Breast epithelium (tissue), 4 donors: ENCODE measurements at regions of chr7 and their contacts with region 1.

Region 1: DNA sequence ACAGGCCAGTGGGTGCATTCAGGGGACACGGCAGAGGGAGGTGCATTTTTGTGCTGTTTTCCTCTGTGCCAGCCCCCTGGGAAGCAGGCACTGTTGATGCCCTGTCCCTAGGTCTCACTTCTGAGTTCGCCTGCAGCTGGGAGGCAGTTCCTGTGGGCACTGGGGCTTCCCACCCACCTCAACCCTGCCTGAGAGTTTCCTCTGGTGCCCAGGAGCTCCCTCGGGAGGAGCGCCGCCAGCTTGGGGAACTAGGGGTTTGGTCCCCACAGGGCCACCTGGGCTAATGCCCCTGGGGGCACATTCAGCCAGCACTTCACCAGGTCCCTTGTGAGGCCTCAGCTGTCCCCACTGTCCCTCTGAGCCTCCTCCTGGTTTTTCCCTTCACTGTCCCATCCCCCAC is 178.2 kb upstream of the RHEB start:
- DNase-seq: no peak
- H3K4me3 ChIP-seq: no peak overlapping the region
- H3K27ac ChIP-seq: no peak overlapping the region
- H3K4me1 ChIP-seq: peaks cover 0 to 20% of the 10 kb centered on the region in 2 donors
- H3K27me3 ChIP-seq: no peaks in the 10 kb centered on the region
- CTCF ChIP-seq: no peak
- POLR2A ChIP-seq: no peak

Region 2: DNA sequence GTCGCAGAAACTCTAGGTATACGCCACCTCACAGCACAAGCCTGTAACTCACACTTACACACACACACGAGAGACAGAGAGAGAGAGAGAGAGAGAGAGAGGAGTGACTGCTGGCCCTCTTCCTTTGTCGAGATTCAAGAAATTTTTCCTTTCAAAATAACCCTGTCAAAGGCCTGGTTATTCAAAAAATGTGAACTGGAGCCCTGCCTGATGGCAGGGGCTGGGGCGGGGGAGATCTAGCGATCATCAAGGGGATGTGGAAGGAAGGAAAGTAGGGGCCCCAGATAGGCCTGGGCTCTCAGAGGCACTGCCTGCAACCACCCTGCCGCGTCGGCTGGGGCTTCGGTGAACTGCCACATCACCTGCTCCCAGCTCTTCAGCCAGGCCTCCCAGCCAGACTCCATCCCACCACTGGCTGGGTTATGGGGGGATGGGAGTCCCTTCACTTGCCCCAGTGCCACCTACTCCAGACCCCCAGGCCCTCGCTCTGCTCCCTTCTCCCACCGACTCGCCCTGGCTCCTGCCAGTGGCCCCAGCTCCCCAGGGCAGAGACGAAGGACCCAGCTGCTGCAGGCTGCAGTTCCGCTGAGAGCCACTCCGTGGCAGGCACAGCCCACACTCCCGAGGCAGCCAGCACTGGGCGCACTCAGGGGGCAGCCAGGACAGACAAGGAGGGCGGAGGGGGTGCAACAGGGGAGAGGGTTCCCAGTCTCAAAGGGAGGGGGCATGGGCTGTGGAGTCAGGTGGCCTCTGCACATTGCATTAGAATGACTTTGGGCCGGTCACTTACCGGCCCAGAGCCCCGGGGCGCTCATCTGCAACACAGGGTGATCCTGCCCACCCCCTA is 735.2 kb before region 1 on chr7:
- intact Hi-C with region 1: no loop called
- DNase-seq: no peak
- H3K4me3 ChIP-seq: no peak overlapping the region
- H3K27ac ChIP-seq: no peak overlapping the region
- H3K4me1 ChIP-seq: no peaks in the 10 kb centered on the region
- H3K27me3 ChIP-seq: peaks cover 0 to 48% of the 10 kb centered on the region in 2 donors
- CTCF ChIP-seq: peak in 2 of 3 donors; percentile 60 to 66
- POLR2A ChIP-seq: no peak

Region 3: GRCh38 chr7:151663382-151664236 is 34.3 kb before region 1 on chr7:
- intact Hi-C with region 1: loop called (anchors 1 kb)
- DNase-seq: no peak
- H3K4me3 ChIP-seq: no peak overlapping the region
- H3K27ac ChIP-seq: no peak overlapping the region
- H3K4me1 ChIP-seq: no peaks in the 10 kb centered on the region
- H3K27me3 ChIP-seq: no peaks in the 10 kb centered on the region
- CTCF ChIP-seq: no peak
- POLR2A ChIP-seq: no peak